HCT116 (cell line): ENCODE measurements at regions of chr5 and their contacts with region 1.

Region 1: DNA sequence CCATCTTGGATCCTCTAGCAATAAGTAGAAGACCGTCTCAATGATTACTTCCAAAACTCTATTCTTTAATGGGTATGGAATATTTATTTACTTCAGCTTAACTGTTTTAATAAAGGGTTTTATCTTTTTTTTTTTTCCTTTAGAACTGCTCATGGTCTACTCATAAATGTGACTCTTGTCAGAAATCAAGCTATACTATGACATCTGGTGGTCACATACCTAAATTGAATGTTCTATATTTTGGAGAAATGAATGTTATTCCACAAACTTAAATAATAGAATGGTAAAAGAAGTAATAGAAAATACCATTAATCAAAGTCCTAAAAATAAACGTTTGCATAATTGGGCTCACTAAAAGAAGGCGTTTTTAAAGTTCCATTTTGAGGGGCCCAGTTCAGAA is 131.2 kb upstream of the PLCXD3 start:
- DNase-seq: no peak
- ATAC-seq: no peak
- H3K4me3 ChIP-seq: no peak overlapping the region
- H3K27ac ChIP-seq: no peak overlapping the region
- H3K4me1 ChIP-seq: no peaks in the 10 kb centered on the region
- H3K27me3 ChIP-seq: no peaks in the 10 kb centered on the region
- CTCF ChIP-seq: peak in 2 of 3 experiments; percentile 23 to 28; a peak in 1 of 6 replicates
- POLR2A ChIP-seq: no peak
- RAD21 ChIP-seq: peak; percentile 54

Region 2: GRCh38 chr5:39714036-39714698 is 1927.5 kb before region 1 on chr5:
- CTCF ChIA-PET with region 1: no interaction called
- POLR2A ChIA-PET with region 1: no interaction called
- RAD21 ChIA-PET with region 1: no interaction called
- intact Hi-C with region 1: loop called (anchors 10 kb)
- DNase-seq: peak; percentile 69
- ATAC-seq: peak; percentile 76
- H3K4me3 ChIP-seq: no peak overlapping the region
- H3K27ac ChIP-seq: no peak overlapping the region
- H3K4me1 ChIP-seq: no peaks in the 10 kb centered on the region; a peak in 1 of 4 replicates
- H3K27me3 ChIP-seq: no peaks in the 10 kb centered on the region
- CTCF ChIP-seq: peak; percentile 53 to 69 (median 65)
- POLR2A ChIP-seq: no peak
- RAD21 ChIP-seq: peak; percentile 80

Region 3: GRCh38 chr5:41270423-41271251 is 371.0 kb before region 1 on chr5:
- CTCF ChIA-PET with region 1: interaction called, 10 read pairs
- POLR2A ChIA-PET with region 1: no interaction called
- RAD21 ChIA-PET with region 1: no interaction called
- intact Hi-C with region 1: loop called (anchors 1 kb)
- DNase-seq: peak; percentile 33
- ATAC-seq: peak; percentile 91
- H3K4me3 ChIP-seq: no peak overlapping the region
- H3K27ac ChIP-seq: no peak overlapping the region
- H3K4me1 ChIP-seq: no peaks in the 10 kb centered on the region
- H3K27me3 ChIP-seq: 0 out of 2 replicates have a peak, but pooled peaks cover 5% of the 10 kb centered on the region
- CTCF ChIP-seq: peak; percentile 51 to 77 (median 70); a peak in 5 of 6 replicates
- POLR2A ChIP-seq: no peak
- RAD21 ChIP-seq: peak; percentile 73

Region 4: DNA sequence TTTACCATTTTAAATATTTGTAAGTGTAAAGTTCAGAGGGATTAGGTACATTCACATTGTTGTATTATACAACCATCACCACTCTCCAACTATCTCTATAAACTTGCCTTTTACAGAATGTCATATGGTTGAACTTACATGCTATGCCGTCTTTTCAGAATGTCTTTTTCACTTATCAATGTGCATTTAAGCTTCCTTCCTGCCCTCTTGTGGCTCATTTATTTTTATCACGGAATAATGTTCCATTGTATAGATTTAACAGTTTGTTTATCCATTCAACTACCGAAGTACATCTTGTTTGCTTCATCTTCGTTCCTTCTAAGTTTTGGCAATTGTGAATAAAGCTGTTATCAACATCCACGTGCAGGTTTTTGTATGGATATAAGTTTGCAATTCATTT is 295.0 kb before region 1 on chr5:
- CTCF ChIA-PET with region 1: interaction called, 4 read pairs
- POLR2A ChIA-PET with region 1: no interaction called
- RAD21 ChIA-PET with region 1: no interaction called
- intact Hi-C with region 1: loop called (anchors 2 kb)
- DNase-seq: peak; percentile 3
- ATAC-seq: no peak
- H3K4me3 ChIP-seq: no peak overlapping the region
- H3K27ac ChIP-seq: no peak overlapping the region
- H3K4me1 ChIP-seq: no peaks in the 10 kb centered on the region
- H3K27me3 ChIP-seq: 0 out of 2 replicates have a peak, but pooled peaks cover 6% of the 10 kb centered on the region
- CTCF ChIP-seq: peak in 2 of 3 experiments; percentile 21 to 27; a peak in 1 of 6 replicates
- POLR2A ChIP-seq: no peak
- RAD21 ChIP-seq: peak; percentile 45